ENCODE measurements at regions of chr10 and their contacts with region 1.

Region 1: DNA sequence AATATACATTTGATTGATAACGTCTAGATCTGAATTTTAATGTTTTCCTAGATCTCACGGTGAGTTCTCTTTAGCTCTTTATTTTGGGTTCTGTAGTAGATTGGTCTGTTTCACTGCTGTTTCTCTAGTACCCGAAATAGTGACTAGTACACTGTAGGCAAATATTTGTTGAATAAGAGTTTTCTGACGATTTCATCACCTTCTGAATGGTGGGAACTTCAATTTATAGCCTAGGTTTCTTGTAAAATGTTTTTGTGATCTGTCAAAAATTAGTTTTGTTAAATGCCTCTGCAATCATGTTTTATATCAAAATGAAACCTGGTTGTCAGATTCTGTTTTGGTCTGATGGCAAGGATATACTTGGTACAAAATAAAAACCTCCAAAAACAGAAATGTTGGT is 10.2 kb downstream of the PDCD4 start:
- DNase-seq: no peak

Region 2: DNA sequence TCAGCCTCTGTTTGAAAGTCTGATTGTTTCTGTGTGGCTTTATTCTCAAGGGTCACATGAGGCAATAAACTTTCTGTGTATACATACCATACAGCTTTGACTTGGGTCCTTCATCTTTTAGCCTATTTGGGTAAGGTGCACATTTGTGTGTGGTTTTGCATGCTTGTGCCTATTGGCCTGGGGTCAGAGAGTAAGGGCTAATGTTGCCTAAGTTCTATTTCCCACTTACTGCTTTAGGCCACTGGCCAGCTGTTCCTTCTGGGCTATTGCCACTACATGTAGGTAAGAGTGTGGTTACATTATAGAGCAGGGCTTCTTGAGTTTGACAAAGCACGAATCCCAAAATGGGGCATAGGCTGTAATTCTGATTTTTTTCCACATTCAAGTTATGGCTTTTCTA is 15.3 kb after region 1 on chr10:
- CTCF ChIA-PET with region 1: interaction called, 10 read pairs
- POLR2A ChIA-PET with region 1: no interaction called
- DNase-seq: no peak

Region 3: GRCh38 chr10:111084366-111085255 is 202.7 kb after region 1 on chr10:
- CTCF ChIA-PET with region 1: no interaction called
- POLR2A ChIA-PET with region 1: no interaction called
- DNase-seq: no peak